Gastrocnemius medialis (tissue), 4 donors: ENCODE measurements at regions of chr20 and their contacts with region 1.

Region 1: GRCh38 chr20:10469599-10469998 is 34.5 kb downstream of the SLX4IP start:
- DNase-seq: peak in 1 of 2 donors; percentile 20
- ATAC-seq: peak; percentile 58 to 82
- H3K4me3 ChIP-seq: no peak overlapping the region
- H3K27ac ChIP-seq: no peak overlapping the region
- H3K4me1 ChIP-seq: peaks cover 10 to 33% of the 10 kb centered on the region in 2 donors
- H3K27me3 ChIP-seq: no peaks in the 10 kb centered on the region
- CTCF ChIP-seq: peak; percentile 34 to 59 (median 41)
- POLR2A ChIP-seq: no peak

Region 2: DNA sequence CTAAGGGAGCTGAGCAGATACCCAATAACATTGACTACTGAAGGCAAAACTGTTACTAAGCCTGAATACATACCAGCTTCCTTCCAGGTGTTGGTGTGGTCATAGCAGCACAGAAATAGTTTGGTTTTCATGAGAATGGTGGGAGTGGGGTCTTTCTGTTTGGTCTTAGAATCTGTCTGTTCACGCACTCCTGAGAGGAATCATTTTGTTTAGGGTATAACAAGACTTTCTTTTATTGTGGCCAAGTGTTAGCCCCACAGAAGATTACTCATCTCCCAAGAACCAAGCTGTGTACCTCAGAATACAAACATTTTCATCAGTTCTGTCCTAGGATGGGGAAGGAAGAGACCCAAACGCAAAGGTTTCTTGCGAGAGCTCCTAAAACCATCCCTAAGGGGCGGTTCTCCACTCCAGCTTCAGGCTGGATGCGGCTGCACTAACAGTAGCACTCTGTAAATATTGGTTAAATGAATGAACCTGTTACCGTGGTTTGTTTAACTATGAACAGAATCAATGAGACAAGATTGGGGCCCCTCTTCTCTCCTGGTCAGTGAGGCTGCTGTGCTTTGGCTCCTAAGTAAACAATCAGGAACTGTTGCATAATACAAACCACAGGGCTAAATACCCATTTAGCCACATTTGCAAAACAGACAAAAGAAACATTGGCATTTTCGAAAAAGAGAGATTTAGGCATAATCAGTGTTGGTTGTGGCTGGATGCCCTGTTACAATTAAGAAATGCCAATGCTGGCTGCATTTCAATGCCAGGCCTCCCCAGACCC is 206.0 kb before region 1 on chr20:
- in situ Hi-C with region 1: no loop called
- intact Hi-C with region 1: no loop called
- DNase-seq: no peak
- ATAC-seq: no peak
- H3K4me3 ChIP-seq: no peak overlapping the region
- H3K27ac ChIP-seq: no peak overlapping the region
- H3K4me1 ChIP-seq: no peaks in the 10 kb centered on the region
- H3K27me3 ChIP-seq: no peaks in the 10 kb centered on the region
- CTCF ChIP-seq: no peak
- POLR2A ChIP-seq: no peak

Region 3: DNA sequence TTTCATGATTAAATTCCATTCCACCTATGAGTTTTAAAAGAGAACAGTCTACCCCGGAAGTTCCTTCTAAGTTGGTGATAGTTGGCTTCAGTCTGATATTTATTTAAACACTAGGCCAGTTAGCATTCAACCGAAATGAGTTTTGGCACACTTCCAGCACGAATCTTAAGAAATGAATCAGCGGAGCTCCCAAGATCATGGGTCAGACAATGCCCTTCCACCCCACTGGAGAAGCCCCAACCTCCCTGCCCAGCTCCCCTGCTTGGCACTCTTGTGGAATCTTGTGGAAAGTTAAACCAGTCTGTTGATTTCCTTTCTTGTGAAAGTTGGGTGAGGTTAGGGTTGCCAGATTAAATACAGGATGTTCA is 99.9 kb before region 1 on chr20:
- in situ Hi-C with region 1: no loop called
- intact Hi-C with region 1: no loop called
- DNase-seq: no peak
- ATAC-seq: no peak
- H3K4me3 ChIP-seq: no peak overlapping the region
- H3K27ac ChIP-seq: no peak overlapping the region
- H3K4me1 ChIP-seq: no peaks in the 10 kb centered on the region
- H3K27me3 ChIP-seq: no peaks in the 10 kb centered on the region
- CTCF ChIP-seq: no peak
- POLR2A ChIP-seq: no peak

Region 4: GRCh38 chr20:10385850-10386544 is 83.6 kb before region 1 on chr20:
- in situ Hi-C with region 1: no loop called
- intact Hi-C with region 1: no loop called
- DNase-seq: no peak
- ATAC-seq: no peak
- H3K4me3 ChIP-seq: no peak overlapping the region
- H3K27ac ChIP-seq: no peak overlapping the region
- H3K4me1 ChIP-seq: no peaks in the 10 kb centered on the region
- H3K27me3 ChIP-seq: no peaks in the 10 kb centered on the region
- CTCF ChIP-seq: no peak
- POLR2A ChIP-seq: no peak

Region 5: DNA sequence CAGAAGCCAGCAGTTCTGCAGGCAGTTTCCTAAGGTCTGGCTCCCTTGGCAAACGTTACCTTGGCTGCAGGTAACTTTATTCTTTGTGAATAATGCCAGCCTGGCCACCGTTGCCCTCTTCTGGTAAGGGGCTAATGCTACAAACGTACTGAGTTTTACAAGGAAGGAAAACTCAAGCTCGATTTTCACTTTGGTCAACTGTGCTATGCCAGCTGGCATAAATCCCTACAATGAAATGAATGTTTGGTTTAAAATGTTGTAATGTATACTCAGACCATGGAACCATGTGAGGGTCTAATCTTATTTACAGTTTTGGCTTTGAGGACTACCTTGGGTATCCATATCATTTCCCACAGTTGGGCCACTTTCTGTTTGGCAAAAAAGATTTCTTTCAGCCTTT is 66.9 kb after region 1 on chr20:
- in situ Hi-C with region 1: no loop called
- intact Hi-C with region 1: loop called (anchors 5 kb)
- DNase-seq: no peak
- ATAC-seq: no peak
- H3K4me3 ChIP-seq: no peak overlapping the region
- H3K27ac ChIP-seq: no peak overlapping the region
- H3K4me1 ChIP-seq: no peaks in the 10 kb centered on the region
- H3K27me3 ChIP-seq: no peaks in the 10 kb centered on the region
- CTCF ChIP-seq: peak in 1 of 5 experiments; percentile 22
- POLR2A ChIP-seq: no peak

Region 6: GRCh38 chr20:10619427-10619826 is 149.8 kb after region 1 on chr20:
- in situ Hi-C with region 1: no loop called
- intact Hi-C with region 1: no loop called
- DNase-seq: no peak
- ATAC-seq: no peak
- H3K4me3 ChIP-seq: no peak overlapping the region
- H3K27ac ChIP-seq: no peak overlapping the region
- H3K4me1 ChIP-seq: no peaks in the 10 kb centered on the region
- H3K27me3 ChIP-seq: no peaks in the 10 kb centered on the region
- CTCF ChIP-seq: no peak
- POLR2A ChIP-seq: no peak